ENCODE measurements at regions of chr6 and their contacts with region 1.

Region 1: GRCh38 chr6:35342258-35343091 is at the start of gene PPARD:
- DNase-seq: peak; percentile 93 to 99 (median 98)
- ATAC-seq: peak; percentile 94 to 97
- H3K4me3 Mint-ChIP-seq: peak within 1 kb of the TSS; percentile 89 to 99 (median 97)
- H3K27ac Mint-ChIP-seq: peak within 1 kb of the TSS; percentile 91 to 99 (median 95)
- H3K4me1 Mint-ChIP-seq: peaks cover 31 to 62% (median 53%) of the 10 kb centered on the region in 4 donors
- H3K27me3 Mint-ChIP-seq: no peaks in the 10 kb centered on the region
- polyA plus RNA-seq, gene PPARD: 1.9 to 14.3 (median 5.5) TPM

Region 2: GRCh38 chr6:34362909-34363680 is 979.4 kb before region 1 on chr6:
- POLR2A ChIA-PET with region 1: no interaction called
- DNase-seq: no peak
- ATAC-seq: no peak
- H3K4me3 Mint-ChIP-seq: no peak overlapping the region
- H3K27ac Mint-ChIP-seq: peak overlapping the region in 5 of 10 donors; percentile 38 to 71 (median 40)
- H3K4me1 Mint-ChIP-seq: peaks cover 19 to 59% (median 51%) of the 10 kb centered on the region in 4 donors
- H3K27me3 Mint-ChIP-seq: no peaks in the 10 kb centered on the region

Region 3: GRCh38 chr6:35247642-35248231 is 94.7 kb before region 1 on chr6:
- POLR2A ChIA-PET with region 1: no interaction called
- DNase-seq: no peak
- ATAC-seq: no peak
- H3K4me3 Mint-ChIP-seq: no peak overlapping the region
- H3K27ac Mint-ChIP-seq: peak overlapping the region in 3 of 10 donors; percentile 5 to 50 (median 28)
- H3K4me1 Mint-ChIP-seq: peaks cover 2 to 14% (median 8%) of the 10 kb centered on the region in 4 donors
- H3K27me3 Mint-ChIP-seq: no peaks in the 10 kb centered on the region

Region 4: DNA sequence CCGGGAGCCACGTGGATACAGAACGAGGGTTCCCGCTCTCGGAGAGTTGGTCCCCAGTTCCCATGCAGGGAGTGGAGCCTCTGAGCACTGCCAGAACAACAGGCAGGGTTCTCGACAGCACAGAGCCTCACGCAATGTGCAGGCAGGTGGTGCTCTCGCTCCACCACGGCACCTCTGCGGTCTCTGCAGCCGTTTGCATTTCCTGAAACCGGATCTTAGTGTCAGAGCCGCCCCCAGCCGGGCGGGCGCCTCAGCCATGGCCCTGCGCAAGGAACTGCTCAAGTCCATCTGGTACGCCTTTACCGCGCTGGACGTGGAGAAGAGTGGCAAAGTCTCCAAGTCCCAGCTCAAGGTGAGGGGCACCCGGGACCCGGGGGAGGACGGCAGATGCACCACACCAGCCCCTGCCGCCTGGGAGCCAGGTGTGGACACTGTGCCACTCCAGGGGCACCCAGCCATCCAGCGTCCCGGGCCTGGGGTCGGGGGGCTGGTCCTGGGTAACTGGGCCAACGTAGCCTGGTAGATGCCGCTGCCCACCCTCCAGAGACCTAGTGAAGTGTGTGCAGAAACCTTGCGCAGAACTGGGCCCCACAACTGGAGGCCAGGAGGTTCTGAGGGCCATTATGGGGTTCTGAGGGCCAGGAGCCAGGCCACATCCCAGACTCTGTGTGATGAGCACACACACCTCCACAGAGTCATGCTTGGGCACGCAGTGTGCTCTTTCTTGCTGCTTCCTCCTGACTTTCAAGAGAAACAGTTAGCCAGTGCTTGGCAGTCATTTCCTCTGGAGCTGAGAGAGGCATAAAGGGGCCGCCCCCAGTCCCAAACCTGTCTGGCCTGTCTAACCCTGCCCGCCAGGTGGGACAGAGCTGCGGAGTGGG is 44.6 kb before region 1 on chr6 and contains the start of gene DEF6:
- POLR2A ChIA-PET with region 1: interaction called, 25 read pairs
- DNase-seq: peak; percentile 76 to 93 (median 86)
- ATAC-seq: peak; percentile 82 to 87
- H3K4me3 Mint-ChIP-seq: peak within 1 kb of the TSS; percentile 82 to 98 (median 90)
- H3K27ac Mint-ChIP-seq: peak within 1 kb of the TSS; percentile 91 to 100 (median 97)
- H3K4me1 Mint-ChIP-seq: peaks cover 30 to 50% (median 47%) of the 10 kb centered on the region in 4 donors
- H3K27me3 Mint-ChIP-seq: no peaks in the 10 kb centered on the region
- polyA plus RNA-seq, gene DEF6: 93.7 to 196 (median 136) TPM

Region 5: GRCh38 chr6:35327349-35328027 is 15.0 kb before region 1 on chr6:
- POLR2A ChIA-PET with region 1: interaction called, 18 read pairs
- DNase-seq: peak; percentile 58 to 88 (median 76)
- ATAC-seq: peak; percentile 75 to 84
- H3K4me3 Mint-ChIP-seq: peak overlapping the region in 4 of 10 donors; percentile 24 to 47 (median 34)
- H3K27ac Mint-ChIP-seq: peak overlapping the region; percentile 14 to 94 (median 86)
- H3K4me1 Mint-ChIP-seq: peaks cover 9 to 30% (median 26%) of the 10 kb centered on the region in 4 donors
- H3K27me3 Mint-ChIP-seq: no peaks in the 10 kb centered on the region

Region 6: DNA sequence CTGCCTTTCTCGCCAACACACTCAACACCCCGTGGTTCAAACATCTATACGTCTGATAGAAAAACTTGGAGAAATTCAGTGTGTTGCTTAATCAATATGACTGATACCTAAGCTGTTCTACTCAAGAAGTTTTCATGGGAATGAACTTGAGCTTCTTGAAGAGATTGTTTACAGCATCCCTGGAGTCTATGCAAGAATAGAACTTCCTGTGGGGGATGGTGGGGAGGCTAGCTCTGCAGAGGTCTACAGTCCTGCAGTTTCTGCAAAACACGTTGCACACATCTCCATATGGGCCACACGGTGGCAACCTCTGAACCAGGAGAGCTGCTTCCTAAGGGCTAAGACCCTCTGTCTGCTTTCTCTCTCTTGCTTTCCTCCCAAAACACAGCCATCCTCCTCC is 76.9 kb after region 1 on chr6:
- POLR2A ChIA-PET with region 1: interaction called, 12 read pairs
- DNase-seq: peak in 4 of 10 donors; percentile 8 to 36 (median 20)
- ATAC-seq: peak; percentile 77 to 80
- H3K4me3 Mint-ChIP-seq: peak overlapping the region in 8 of 10 donors; percentile 6 to 67 (median 40)
- H3K27ac Mint-ChIP-seq: peak overlapping the region in 9 of 10 donors; percentile 67 to 88 (median 84)
- H3K4me1 Mint-ChIP-seq: peaks cover 23 to 50% (median 38%) of the 10 kb centered on the region in 4 donors
- H3K27me3 Mint-ChIP-seq: no peaks in the 10 kb centered on the region

Region 7: DNA sequence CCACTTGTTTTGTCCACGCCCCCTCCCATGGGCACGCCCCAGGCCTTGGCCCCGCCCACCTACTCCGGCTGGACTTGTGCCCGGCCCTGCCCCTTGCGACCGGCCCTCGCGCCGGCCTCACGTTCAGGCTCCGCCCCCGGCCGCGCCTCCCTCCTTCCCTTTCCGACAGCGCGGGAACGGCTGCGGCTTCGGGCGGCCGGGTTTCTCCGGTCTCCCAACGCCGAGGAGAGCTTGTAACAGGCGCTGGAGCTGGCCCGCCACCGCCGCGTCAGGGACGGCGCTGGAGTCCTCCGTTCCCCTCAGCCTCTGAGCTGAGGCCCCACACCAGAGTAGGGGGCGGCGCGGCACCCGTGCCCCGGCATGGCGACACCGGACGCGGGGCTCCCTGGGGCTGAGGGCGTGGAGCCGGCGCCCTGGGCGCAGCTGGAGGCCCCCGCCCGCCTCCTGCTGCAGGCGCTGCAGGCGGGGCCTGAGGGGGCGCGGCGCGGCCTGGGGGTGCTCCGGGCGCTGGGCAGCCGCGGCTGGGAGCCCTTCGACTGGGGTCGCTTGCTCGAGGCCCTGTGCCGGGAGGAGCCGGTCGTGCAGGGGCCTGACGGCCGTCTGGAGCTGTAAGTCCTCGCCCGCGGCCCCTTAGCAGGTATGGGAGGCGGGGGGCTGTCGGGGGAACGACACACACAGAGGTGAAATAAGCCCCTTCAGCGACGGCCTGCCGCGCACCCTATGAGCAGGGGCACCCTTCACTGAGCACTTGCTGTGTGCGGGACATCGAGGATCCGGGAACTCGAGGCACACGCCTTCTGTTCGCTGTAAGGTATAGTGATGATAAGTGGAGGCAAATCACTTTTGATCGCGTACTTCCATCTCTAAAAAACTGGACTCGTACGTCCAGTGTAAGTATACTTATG is 110.0 kb after region 1 on chr6 and contains the start of gene FANCE:
- POLR2A ChIA-PET with region 1: interaction called, 67 read pairs
- DNase-seq: peak; percentile 59 to 91 (median 77)
- ATAC-seq: peak; percentile 74 to 77
- H3K4me3 Mint-ChIP-seq: peak within 1 kb of the TSS; percentile 82 to 92 (median 86)
- H3K27ac Mint-ChIP-seq: peak within 1 kb of the TSS; percentile 51 to 93 (median 82)
- H3K4me1 Mint-ChIP-seq: peaks cover 14 to 54% (median 40%) of the 10 kb centered on the region in 4 donors
- H3K27me3 Mint-ChIP-seq: no peaks in the 10 kb centered on the region
- polyA plus RNA-seq, gene FANCE: 3.2 to 5.5 (median 3.3) TPM

Region 8: GRCh38 chr6:35786810-35787209 is 444.3 kb after region 1 on chr6:
- POLR2A ChIA-PET with region 1: no interaction called
- DNase-seq: no peak
- ATAC-seq: no peak
- H3K4me3 Mint-ChIP-seq: no peak overlapping the region
- H3K27ac Mint-ChIP-seq: no peak overlapping the region
- H3K4me1 Mint-ChIP-seq: peaks cover 0 to 4% (median under 1%) of the 10 kb centered on the region in 4 donors
- H3K27me3 Mint-ChIP-seq: peaks cover 27 to 66% (median 55%) of the 10 kb centered on the region in 5 donors

Measured in naive thymus-derived CD8-positive, alpha-beta T cell (primary cell).